ENCODE measurements at regions of chr5 and their contacts with region 1.

Region 1: DNA sequence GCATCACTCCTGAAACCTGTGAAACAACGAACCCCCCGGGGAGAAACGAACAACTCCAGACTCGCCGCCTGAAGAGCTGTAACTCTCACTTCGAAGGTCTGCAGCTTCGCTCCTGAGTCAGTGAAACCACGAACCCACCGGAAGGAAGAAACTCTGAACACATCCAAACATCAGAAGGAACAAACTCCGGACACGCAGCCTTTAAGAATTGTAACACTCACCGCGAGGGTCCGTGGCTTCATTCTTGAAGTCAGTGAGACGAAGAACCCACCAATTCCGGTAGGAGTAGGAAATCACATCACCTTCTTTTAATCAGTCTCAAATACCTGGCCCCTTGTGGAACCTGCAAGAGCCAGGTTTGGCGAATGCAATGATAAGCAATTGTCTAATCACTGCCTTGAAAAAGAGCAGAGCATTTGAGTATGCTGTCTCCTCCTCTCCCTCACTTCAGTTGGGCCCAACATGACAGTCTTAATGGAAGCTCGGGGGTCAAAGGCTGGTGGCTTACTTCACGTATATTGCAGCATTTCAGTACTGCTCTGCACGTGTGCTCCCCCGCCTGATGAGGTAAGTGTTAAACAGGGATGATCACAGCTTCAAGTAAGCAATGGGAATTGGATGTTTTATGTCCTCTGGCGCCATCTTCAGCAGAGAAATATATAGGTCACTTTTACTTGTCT is 473 bp downstream of the IRGM start:
- DNase-seq: peak; percentile 76 to 85 (median 77)
- H3K4me3 ChIP-seq: peak overlapping the region in 1 of 2 donors; percentile 40
- H3K4me3 Mint-ChIP-seq: peak overlapping the region; percentile 83 to 91 (median 86)
- H3K27ac ChIP-seq: peak overlapping the region; percentile 50
- H3K27ac Mint-ChIP-seq: peak overlapping the region; percentile 76 to 95 (median 92)
- H3K4me1 ChIP-seq: peaks cover 8% of the 10 kb centered on the region
- H3K4me1 Mint-ChIP-seq: peaks cover 16 to 33% (median 26%) of the 10 kb centered on the region in 4 donors
- H3K27me3 ChIP-seq: no peaks in the 10 kb centered on the region
- H3K27me3 Mint-ChIP-seq: no peaks in the 10 kb centered on the region

Region 2: DNA sequence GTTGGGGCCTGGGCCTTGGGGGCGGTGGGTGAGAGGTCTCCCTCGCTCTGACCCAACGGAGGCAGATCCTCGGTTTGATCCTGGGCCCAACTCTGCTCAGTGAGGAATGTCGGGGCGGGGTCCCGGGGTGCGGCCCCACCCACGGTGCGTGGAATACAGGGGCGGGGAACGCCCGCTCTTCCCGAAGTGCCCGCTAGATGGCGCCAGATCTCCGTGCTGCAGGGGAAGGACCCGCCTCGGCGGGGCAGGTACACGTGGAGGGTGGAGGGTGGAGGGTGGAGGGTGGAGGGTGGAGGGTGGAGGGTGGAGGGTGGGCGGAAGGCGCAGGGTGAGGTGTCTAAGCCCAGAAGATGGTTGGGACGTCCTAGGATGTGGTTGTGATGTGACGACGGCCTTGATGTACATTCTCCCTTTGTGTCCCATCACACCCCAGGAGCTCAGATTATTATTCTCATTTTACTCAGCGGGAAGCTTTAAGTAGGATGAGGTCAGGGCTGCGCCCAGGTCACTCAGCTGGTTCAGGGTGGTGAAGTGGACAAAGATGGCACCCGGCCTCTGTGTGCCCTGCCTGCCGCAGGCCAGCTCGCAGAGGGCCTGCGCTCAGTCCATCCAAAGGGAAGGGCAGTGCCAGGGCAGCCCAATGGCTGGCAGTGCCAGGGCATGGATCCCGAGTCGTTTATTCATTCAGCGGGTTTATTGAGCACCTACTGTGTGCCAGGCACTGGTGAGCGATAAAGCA is 387.8 kb before region 1 on chr5:
- CTCF ChIA-PET with region 1: interaction called, 6 read pairs
- POLR2A ChIA-PET with region 1: interaction called, 5 read pairs
- intact Hi-C with region 1: loop called (anchors 1 kb)
- DNase-seq: peak; percentile 82 to 86 (median 82)
- H3K4me3 ChIP-seq: no peak overlapping the region
- H3K4me3 Mint-ChIP-seq: peak overlapping the region in 5 of 8 donors; percentile 29 to 72 (median 49)
- H3K27ac ChIP-seq: no peak overlapping the region
- H3K27ac Mint-ChIP-seq: peak overlapping the region; percentile 52 to 88 (median 70)
- H3K4me1 ChIP-seq: peaks cover 19% of the 10 kb centered on the region
- H3K4me1 Mint-ChIP-seq: peaks cover 12 to 29% (median 21%) of the 10 kb centered on the region in 4 donors
- H3K27me3 ChIP-seq: no peaks in the 10 kb centered on the region
- H3K27me3 Mint-ChIP-seq: no peaks in the 10 kb centered on the region

Region 3: GRCh38 chr5:150656191-150657132 is 190.3 kb before region 1 on chr5:
- CTCF ChIA-PET with region 1: interaction called, 8 read pairs
- POLR2A ChIA-PET with region 1: no interaction called
- intact Hi-C with region 1: loop called (anchors 2 kb)
- DNase-seq: peak; percentile 76 to 85 (median 84)
- H3K4me3 ChIP-seq: peak overlapping the region; percentile 17 to 56
- H3K4me3 Mint-ChIP-seq: peak overlapping the region; percentile 81 to 92 (median 83)
- H3K27ac ChIP-seq: peak overlapping the region; percentile 28
- H3K27ac Mint-ChIP-seq: peak overlapping the region in 6 of 7 donors; percentile 11 to 88 (median 70)
- H3K4me1 ChIP-seq: peaks cover 12% of the 10 kb centered on the region
- H3K4me1 Mint-ChIP-seq: peaks cover 3 to 12% (median 9%) of the 10 kb centered on the region in 4 donors
- H3K27me3 ChIP-seq: no peaks in the 10 kb centered on the region
- H3K27me3 Mint-ChIP-seq: no peaks in the 10 kb centered on the region

Region 4: GRCh38 chr5:150789943-150790611 is 56.7 kb before region 1 on chr5:
- CTCF ChIA-PET with region 1: interaction called, 10 read pairs
- POLR2A ChIA-PET with region 1: no interaction called
- intact Hi-C with region 1: no loop called
- DNase-seq: peak; percentile 39 to 84 (median 44)
- H3K4me3 ChIP-seq: no peak overlapping the region
- H3K4me3 Mint-ChIP-seq: peak overlapping the region in 7 of 8 donors; percentile 4 to 77 (median 57)
- H3K27ac ChIP-seq: peak overlapping the region; percentile 4
- H3K27ac Mint-ChIP-seq: peak overlapping the region; percentile 66 to 94 (median 82)
- H3K4me1 ChIP-seq: peaks cover 34% of the 10 kb centered on the region
- H3K4me1 Mint-ChIP-seq: peaks cover 30 to 51% (median 42%) of the 10 kb centered on the region in 4 donors
- H3K27me3 ChIP-seq: no peaks in the 10 kb centered on the region
- H3K27me3 Mint-ChIP-seq: no peaks in the 10 kb centered on the region

Region 5: DNA sequence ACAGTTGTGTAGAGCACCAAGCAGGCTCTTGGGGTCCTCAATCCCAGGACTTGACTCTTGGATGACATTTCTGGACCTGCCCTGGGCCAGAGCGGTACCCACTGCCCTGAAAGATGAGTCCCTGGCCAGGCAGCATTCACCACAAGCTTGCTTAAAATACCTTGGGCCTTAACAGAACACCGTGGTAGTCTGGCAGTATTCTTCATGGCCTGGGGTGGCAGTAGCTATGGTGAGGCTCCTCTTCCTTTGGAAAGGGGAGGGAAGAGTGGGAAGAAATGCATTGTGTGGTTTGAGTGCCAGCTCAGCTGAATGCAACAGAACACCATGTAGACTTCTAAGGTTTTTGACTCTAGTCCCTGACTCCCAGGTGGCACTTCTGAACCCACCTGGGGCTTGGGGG is 29.8 kb before region 1 on chr5:
- CTCF ChIA-PET with region 1: interaction called, 10 read pairs
- POLR2A ChIA-PET with region 1: no interaction called
- intact Hi-C with region 1: no loop called
- DNase-seq: no peak
- H3K4me3 ChIP-seq: no peak overlapping the region
- H3K4me3 Mint-ChIP-seq: no peak overlapping the region
- H3K27ac ChIP-seq: no peak overlapping the region
- H3K27ac Mint-ChIP-seq: no peak overlapping the region
- H3K4me1 ChIP-seq: no peaks in the 10 kb centered on the region
- H3K4me1 Mint-ChIP-seq: no peaks in the 10 kb centered on the region
- H3K27me3 ChIP-seq: no peaks in the 10 kb centered on the region
- H3K27me3 Mint-ChIP-seq: peaks cover 3 to 13% of the 10 kb centered on the region in 2 donors

Region 6: DNA sequence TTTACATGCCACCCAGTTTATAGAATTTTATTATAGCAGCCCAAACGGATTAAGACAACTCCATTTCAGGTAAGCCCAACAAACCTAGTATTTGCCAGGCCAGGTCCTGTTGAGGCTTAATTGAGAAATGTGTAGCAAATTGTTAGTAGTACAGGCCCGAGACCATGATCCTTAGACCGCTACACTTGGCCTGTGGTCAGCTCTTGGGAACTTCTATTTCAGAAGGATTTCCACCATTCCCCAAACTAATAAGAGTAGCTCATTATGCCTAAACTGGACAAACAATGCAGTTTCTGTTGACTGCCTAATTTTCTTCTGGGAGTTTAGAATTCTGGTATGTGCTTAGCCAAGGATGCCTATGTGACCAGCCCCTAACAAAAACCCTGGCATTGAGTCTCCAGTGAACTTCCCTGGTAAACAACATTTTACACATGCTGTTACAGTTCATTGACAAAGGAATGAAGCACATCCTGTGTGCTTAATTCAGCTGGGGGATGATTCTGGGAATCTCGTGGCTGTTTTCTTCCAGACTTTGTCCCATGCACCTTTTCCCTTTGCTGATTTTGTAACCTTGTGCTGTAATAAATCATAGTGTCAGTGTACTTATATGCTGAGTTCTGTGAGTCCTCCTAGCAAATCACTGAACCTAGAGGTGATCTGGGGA is 168.0 kb after region 1 on chr5:
- CTCF ChIA-PET with region 1: no interaction called
- POLR2A ChIA-PET with region 1: no interaction called
- intact Hi-C with region 1: no loop called
- DNase-seq: no peak
- H3K4me3 ChIP-seq: no peak overlapping the region
- H3K4me3 Mint-ChIP-seq: no peak overlapping the region
- H3K27ac ChIP-seq: no peak overlapping the region
- H3K27ac Mint-ChIP-seq: no peak overlapping the region
- H3K4me1 ChIP-seq: peaks cover 8% of the 10 kb centered on the region
- H3K4me1 Mint-ChIP-seq: peaks cover 4 to 16% (median 10%) of the 10 kb centered on the region in 4 donors
- H3K27me3 ChIP-seq: no peaks in the 10 kb centered on the region
- H3K27me3 Mint-ChIP-seq: no peaks in the 10 kb centered on the region